ENCODE measurements at regions of chr18 and their contacts with region 1.

Region 1: GRCh38 chr18:74819433-74820059 is 221.9 kb downstream of the ZNF407 start:
- DNase-seq: no peak
- ATAC-seq: peak; percentile 100
- H3K4me3 ChIP-seq: no peak overlapping the region
- H3K27ac ChIP-seq: no peak overlapping the region
- H3K4me1 ChIP-seq: peaks cover 0 to 6% of the 10 kb centered on the region in 2 experiments; a peak in 1 of 4 replicates
- H3K27me3 ChIP-seq: no peaks in the 10 kb centered on the region
- CTCF ChIP-seq: peak; percentile 56 to 98 (median 96); a peak in 5 of 6 replicates
- POLR2A ChIP-seq: no peak
- RAD21 ChIP-seq: peak; percentile 56

Region 2: DNA sequence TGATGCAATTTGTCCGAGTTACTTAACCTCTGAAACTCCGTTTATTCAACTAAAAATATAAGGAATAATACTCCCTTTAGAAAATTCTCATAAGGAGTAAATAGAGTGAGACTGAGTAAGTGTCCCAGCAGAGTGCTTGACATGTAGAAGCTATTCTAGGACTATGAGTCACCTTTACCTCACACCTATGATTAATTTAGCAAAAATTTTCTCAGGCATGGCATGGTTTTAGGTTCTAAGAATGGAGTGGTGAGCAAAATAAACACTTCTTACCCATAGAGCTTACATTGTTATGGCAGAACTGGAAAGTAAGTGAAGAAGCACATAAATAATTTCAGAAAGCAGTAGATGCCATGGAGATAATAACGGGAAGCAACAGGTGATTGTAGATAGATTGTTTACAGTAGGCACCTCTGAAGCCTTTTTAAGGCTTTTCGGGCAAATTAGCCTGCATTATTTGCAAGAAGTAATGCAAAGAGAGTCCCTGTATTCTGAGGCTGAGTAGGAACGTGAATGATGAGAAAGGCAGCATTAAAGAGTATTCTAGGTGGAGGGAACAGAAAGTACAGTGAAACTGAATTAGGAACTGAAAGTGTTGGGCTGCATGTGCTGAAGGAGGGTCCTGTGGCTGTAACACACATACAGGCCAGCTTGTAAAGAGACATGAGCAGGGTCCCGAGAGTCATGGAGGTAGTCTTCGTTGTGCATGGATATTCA is 12.7 kb before region 1 on chr18:
- CTCF ChIA-PET with region 1: interaction called, 17 read pairs
- POLR2A ChIA-PET with region 1: no interaction called
- RAD21 ChIA-PET with region 1: no interaction called
- intact Hi-C with region 1: no loop called
- DNase-seq: peak; percentile 77
- ATAC-seq: peak; percentile 92
- H3K4me3 ChIP-seq: peak overlapping the region in 1 of 2 experiments; percentile 21; a peak in 2 of 4 replicates
- H3K27ac ChIP-seq: peak overlapping the region; percentile 55; the same call in 1 of the 2 replicates
- H3K4me1 ChIP-seq: peaks cover 22 to 30% of the 10 kb centered on the region in 2 experiments
- H3K27me3 ChIP-seq: no peaks in the 10 kb centered on the region
- CTCF ChIP-seq: no peak
- POLR2A ChIP-seq: no peak
- RAD21 ChIP-seq: no peak